Activated CD4-positive, alpha-beta memory T cell treated with anti-CD3 and anti-CD28 coated beads for 36 hours (primary cell): ENCODE measurements at regions of chr14 and their contacts with region 1.

Region 1: DNA sequence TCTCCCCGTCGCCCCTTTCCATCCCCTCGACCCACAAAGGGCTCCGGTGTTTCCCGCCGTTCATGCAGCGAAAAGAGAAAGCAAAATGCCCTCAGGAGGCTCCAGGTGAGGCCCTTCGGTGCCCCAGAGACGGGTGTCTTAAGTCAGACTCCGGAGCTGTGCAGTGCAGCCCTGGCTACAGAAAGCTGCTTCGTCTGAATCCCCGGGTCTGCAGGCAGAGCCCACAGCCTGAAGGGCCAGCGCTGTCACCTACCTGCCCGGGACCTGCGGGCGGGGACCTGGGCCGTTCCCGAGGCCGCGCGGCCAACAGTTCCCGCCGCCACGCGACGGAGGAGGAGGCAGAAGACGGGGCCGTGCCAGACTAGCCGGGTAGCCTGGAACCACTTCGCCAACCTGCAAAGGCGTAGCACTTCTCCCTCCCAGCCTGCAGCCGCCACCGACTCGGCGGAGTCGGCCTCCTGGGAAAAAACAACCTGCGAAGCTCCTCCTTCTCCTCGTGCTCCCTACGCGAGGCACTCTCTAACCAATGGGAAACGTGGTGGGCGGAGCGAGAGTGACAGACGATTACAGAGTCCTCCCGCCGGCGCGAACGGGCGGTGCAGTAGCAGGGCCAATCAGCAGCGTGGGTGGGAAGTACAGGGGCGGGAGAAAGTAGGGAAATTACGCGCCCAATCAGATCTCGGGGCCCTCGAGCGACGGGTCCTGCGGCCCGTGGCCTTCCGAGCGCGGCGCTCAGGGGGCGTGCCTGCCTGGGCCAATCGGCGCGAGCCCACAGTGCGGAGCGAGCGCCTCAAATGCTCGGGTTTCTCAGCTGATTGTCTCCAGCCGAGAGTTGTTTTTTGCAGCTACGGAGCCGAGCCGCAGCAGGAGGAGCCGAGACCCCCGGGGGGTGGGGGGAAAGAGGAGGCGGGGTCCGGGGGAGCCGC is at the starts of genes GPR137C and TXNDC16:
- DNase-seq: peak; percentile 100
- H3K4me3 Mint-ChIP-seq: peak within 1 kb of the TSS; percentile 92
- H3K27ac Mint-ChIP-seq: peak within 1 kb of the TSS; percentile 55
- H3K4me1 Mint-ChIP-seq: peaks cover 20% of the 10 kb centered on the region
- H3K27me3 Mint-ChIP-seq: no peaks in the 10 kb centered on the region
- total RNA-seq, gene GPR137C: 0.12 to 0.19 TPM
- total RNA-seq, gene TXNDC16: 4.3 to 4.8 TPM

Region 2: GRCh38 chr14:51651388-51652167 is 900.7 kb before region 1 on chr14 and contains the start of gene FRMD6:
- CTCF ChIA-PET with region 1: no interaction called
- POLR2A ChIA-PET with region 1: no interaction called
- intact Hi-C with region 1: loop called (anchors 5 kb)
- DNase-seq: peak; percentile 89
- H3K4me3 Mint-ChIP-seq: peak within 1 kb of the TSS; percentile 78
- H3K27ac Mint-ChIP-seq: peak within 1 kb of the TSS; percentile 5
- H3K4me1 Mint-ChIP-seq: peaks cover 26% of the 10 kb centered on the region
- H3K27me3 Mint-ChIP-seq: peaks cover 17% of the 10 kb centered on the region
- total RNA-seq, gene FRMD6: 3.2 to 3.4 TPM

Region 3: GRCh38 chr14:52313903-52314594 is 238.3 kb before region 1 on chr14 and contains the start of gene PTGER2:
- CTCF ChIA-PET with region 1: no interaction called
- POLR2A ChIA-PET with region 1: interaction called, 9 read pairs
- intact Hi-C with region 1: loop called (anchors 5 kb)
- DNase-seq: peak; percentile 90
- H3K4me3 Mint-ChIP-seq: peak within 1 kb of the TSS; percentile 97
- H3K27ac Mint-ChIP-seq: peak within 1 kb of the TSS; percentile 90
- H3K4me1 Mint-ChIP-seq: peaks cover 69% of the 10 kb centered on the region
- H3K27me3 Mint-ChIP-seq: peaks cover 6% of the 10 kb centered on the region
- total RNA-seq, gene PTGER2: 10.7 to 12.9 TPM

Region 4: DNA sequence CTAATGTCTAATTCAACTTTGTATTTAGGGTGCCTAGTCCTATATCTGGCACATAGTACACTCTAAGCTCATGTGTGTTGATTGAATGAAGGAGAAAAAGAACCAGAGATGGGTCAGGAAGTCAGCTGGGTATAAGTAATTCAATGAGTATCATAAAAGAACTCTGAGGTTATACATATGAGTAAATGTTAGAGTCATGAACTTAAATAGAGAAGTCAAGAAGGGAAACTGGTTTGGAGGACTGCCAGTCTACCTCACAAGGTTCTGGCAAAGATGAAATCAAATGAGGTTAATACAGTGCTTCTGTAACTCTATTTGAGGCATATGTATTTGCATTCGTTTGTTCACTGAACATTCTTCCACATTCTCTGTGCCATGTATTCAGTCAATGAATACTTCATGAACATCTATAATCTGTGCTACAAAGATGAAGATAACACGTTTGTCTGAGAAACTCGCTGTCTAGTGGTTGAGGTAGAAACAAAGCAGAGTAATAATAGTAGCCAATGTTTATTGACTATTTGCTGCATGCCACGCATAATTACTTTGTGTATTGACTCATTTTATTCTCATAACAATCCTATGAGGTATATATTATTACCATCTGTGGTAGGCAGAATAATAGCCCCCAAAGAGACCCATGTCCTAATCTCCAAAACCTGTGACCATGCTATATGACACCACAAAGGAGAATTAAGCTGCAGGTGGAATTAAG is 149.4 kb before region 1 on chr14:
- CTCF ChIA-PET with region 1: no interaction called
- POLR2A ChIA-PET with region 1: interaction called, 5 read pairs
- intact Hi-C with region 1: loop called (anchors 5 kb)
- DNase-seq: peak; percentile 51
- H3K4me3 Mint-ChIP-seq: no peak overlapping the region
- H3K27ac Mint-ChIP-seq: peak overlapping the region; percentile 16
- H3K4me1 Mint-ChIP-seq: peaks cover 59% of the 10 kb centered on the region
- H3K27me3 Mint-ChIP-seq: peaks cover 15% of the 10 kb centered on the region

Region 5: GRCh38 chr14:52485350-52485960 is 66.9 kb before region 1 on chr14:
- CTCF ChIA-PET with region 1: no interaction called
- POLR2A ChIA-PET with region 1: no interaction called
- intact Hi-C with region 1: no loop called
- DNase-seq: no peak
- H3K4me3 Mint-ChIP-seq: no peak overlapping the region
- H3K27ac Mint-ChIP-seq: no peak overlapping the region
- H3K4me1 Mint-ChIP-seq: no peaks in the 10 kb centered on the region
- H3K27me3 Mint-ChIP-seq: no peaks in the 10 kb centered on the region

Region 6: GRCh38 chr14:52640137-52640536 is 87.8 kb after region 1 on chr14:
- CTCF ChIA-PET with region 1: interaction called, 4 read pairs
- POLR2A ChIA-PET with region 1: no interaction called
- intact Hi-C with region 1: loop called (anchors 5 kb)
- DNase-seq: peak; percentile 33
- H3K4me3 Mint-ChIP-seq: no peak overlapping the region
- H3K27ac Mint-ChIP-seq: peak overlapping the region; percentile 67
- H3K4me1 Mint-ChIP-seq: peaks cover 11% of the 10 kb centered on the region
- H3K27me3 Mint-ChIP-seq: no peaks in the 10 kb centered on the region

Region 7: GRCh38 chr14:52729925-52730667 is 177.8 kb after region 1 on chr14 and contains the start of gene STYX:
- CTCF ChIA-PET with region 1: interaction called, 4 read pairs
- POLR2A ChIA-PET with region 1: interaction called, 3 read pairs
- intact Hi-C with region 1: loop called (anchors 1 kb)
- DNase-seq: peak; percentile 99
- H3K4me3 Mint-ChIP-seq: peak within 1 kb of the TSS; percentile 87
- H3K27ac Mint-ChIP-seq: peak within 1 kb of the TSS; percentile 82
- H3K4me1 Mint-ChIP-seq: peaks cover 29% of the 10 kb centered on the region
- H3K27me3 Mint-ChIP-seq: no peaks in the 10 kb centered on the region
- total RNA-seq, gene STYX: 15.9 to 17.0 TPM

Region 8: GRCh38 chr14:53152890-53153701 is 600.8 kb after region 1 on chr14 and contains the start of gene DDHD1:
- CTCF ChIA-PET with region 1: no interaction called
- POLR2A ChIA-PET with region 1: no interaction called
- intact Hi-C with region 1: loop called (anchors 2 kb)
- DNase-seq: peak; percentile 88
- H3K4me3 Mint-ChIP-seq: peak within 1 kb of the TSS; percentile 100
- H3K27ac Mint-ChIP-seq: peak within 1 kb of the TSS; percentile 99
- H3K4me1 Mint-ChIP-seq: peaks cover 35% of the 10 kb centered on the region
- H3K27me3 Mint-ChIP-seq: no peaks in the 10 kb centered on the region
- total RNA-seq, gene DDHD1: 40.6 to 42.7 TPM